Heart left ventricle (tissue), 16 donors: ENCODE measurements at regions of chr17 and their contacts with region 1.

Region 1: GRCh38 chr17:42586514-42587230 is 9.1 kb upstream of the PSMC3IP start:
- DNase-seq: no peak
- ATAC-seq: no peak
- H3K4me3 ChIP-seq: no peak overlapping the region
- H3K27ac ChIP-seq: peak overlapping the region in 2 of 12 donors; percentile 1 to 65
- H3K4me1 ChIP-seq: peaks cover 0 to 36% (median 10%) of the 10 kb centered on the region in 12 donors
- H3K27me3 ChIP-seq: no peaks in the 10 kb centered on the region
- CTCF ChIP-seq: no peak
- POLR2A ChIP-seq: no peak

Region 2: GRCh38 chr17:42677008-42677857 is 90.6 kb after region 1 on chr17:
- intact Hi-C with region 1: loop called in 1 of 10 experiments (anchors 10 kb)
- DNase-seq: peak; percentile 100
- ATAC-seq: peak; percentile 70 to 87 (median 82)
- H3K4me3 ChIP-seq: peak overlapping the region; percentile 79 to 97 (median 92)
- H3K27ac ChIP-seq: peak overlapping the region; percentile 66 to 99 (median 96)
- H3K4me1 ChIP-seq: peaks cover 2 to 81% (median 65%) of the 10 kb centered on the region in 12 donors
- H3K27me3 ChIP-seq: peaks cover 0 to 35% (median 0%) of the 10 kb centered on the region in 9 donors
- CTCF ChIP-seq: no peak
- POLR2A ChIP-seq: no peak

Region 3: GRCh38 chr17:42704837-42705494 is 118.3 kb after region 1 on chr17:
- intact Hi-C with region 1: loop called in 1 of 10 experiments (anchors 5 kb)
- DNase-seq: no peak
- ATAC-seq: no peak
- H3K4me3 ChIP-seq: no peak overlapping the region
- H3K27ac ChIP-seq: no peak overlapping the region
- H3K4me1 ChIP-seq: no peaks in the 10 kb centered on the region
- H3K27me3 ChIP-seq: no peaks in the 10 kb centered on the region
- CTCF ChIP-seq: no peak
- POLR2A ChIP-seq: no peak

Region 4: GRCh38 chr17:42754782-42755181 is 168.1 kb after region 1 on chr17:
- intact Hi-C with region 1: loop called in 1 of 10 experiments (anchors 5 kb)
- DNase-seq: peak in 4 of 5 donors; percentile 23 to 78 (median 52)
- ATAC-seq: peak; percentile 74 to 89 (median 82)
- H3K4me3 ChIP-seq: no peak overlapping the region
- H3K27ac ChIP-seq: peak overlapping the region in 4 of 12 donors; percentile 3 to 43 (median 14)
- H3K4me1 ChIP-seq: peaks cover 0 to 31% (median 19%) of the 10 kb centered on the region in 12 donors
- H3K27me3 ChIP-seq: peaks cover 0 to 7% (median 0%) of the 10 kb centered on the region in 9 donors
- CTCF ChIP-seq: no peak
- POLR2A ChIP-seq: no peak

Region 5: DNA sequence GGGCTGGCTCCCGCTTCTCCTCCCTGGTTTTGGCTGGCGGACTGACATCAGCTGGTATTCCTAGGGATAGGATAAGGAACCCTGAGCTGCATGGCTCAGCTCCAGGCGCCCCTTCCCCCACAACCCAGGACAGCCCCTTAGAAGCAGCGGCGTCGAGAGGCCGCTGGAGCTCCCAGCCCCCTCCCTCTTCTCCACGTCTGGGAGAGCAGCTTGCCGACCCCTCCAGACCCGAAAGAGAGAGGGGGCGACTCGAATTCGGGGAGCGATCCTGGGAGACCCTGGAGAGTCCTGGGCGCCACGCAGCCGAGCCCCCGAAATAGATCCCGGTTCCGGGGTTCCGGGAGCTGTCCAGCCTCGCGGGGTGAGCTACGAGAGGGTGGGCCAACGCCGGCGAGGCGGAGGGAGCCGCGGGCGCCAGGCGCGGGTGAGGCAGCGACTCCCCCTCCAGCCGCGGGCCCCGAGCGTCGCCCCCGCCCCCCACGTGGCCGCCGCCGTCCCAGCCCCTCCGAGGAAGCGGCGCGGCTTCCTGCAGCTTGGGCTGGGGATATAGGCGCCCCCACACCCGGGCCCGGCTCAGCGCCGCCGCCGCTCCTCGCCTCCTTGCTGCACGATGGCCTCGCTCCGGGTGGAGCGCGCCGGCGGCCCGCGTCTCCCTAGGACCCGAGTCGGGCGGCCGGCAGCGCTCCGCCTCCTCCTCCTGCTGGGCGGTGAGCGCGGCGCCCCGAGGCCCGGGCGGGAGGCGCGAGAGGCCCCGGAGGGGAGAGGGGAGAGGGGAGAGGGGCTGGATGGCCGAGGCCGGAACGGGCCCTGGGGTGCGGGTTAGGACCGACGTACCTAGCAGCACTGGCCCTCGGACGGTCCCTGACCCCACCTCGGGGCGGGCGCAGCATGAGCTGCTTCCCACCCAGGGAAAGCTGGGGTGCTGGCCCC is 174.2 kb after region 1 on chr17 and contains the start of gene RAMP2:
- intact Hi-C with region 1: loop called in 3 of 10 experiments (anchors 5 to 10 kb)
- DNase-seq: peak in 3 of 5 donors; percentile 58 to 63 (median 60)
- ATAC-seq: peak in 3 of 4 donors; percentile 12 to 56 (median 52)
- H3K4me3 ChIP-seq: peak within 1 kb of the TSS; percentile 44 to 92 (median 70)
- H3K27ac ChIP-seq: peak within 1 kb of the TSS; percentile 78 to 98 (median 90)
- H3K4me1 ChIP-seq: peaks cover 3 to 36% (median 16%) of the 10 kb centered on the region in 12 donors
- H3K27me3 ChIP-seq: peaks cover 0 to 27% (median 2%) of the 10 kb centered on the region in 9 donors
- CTCF ChIP-seq: no peak
- POLR2A ChIP-seq: peak in 1 of 2 donors; percentile 45
- total RNA-seq, gene RAMP2: 31.2 to 58.3 (median 39.7) TPM

Region 6: DNA sequence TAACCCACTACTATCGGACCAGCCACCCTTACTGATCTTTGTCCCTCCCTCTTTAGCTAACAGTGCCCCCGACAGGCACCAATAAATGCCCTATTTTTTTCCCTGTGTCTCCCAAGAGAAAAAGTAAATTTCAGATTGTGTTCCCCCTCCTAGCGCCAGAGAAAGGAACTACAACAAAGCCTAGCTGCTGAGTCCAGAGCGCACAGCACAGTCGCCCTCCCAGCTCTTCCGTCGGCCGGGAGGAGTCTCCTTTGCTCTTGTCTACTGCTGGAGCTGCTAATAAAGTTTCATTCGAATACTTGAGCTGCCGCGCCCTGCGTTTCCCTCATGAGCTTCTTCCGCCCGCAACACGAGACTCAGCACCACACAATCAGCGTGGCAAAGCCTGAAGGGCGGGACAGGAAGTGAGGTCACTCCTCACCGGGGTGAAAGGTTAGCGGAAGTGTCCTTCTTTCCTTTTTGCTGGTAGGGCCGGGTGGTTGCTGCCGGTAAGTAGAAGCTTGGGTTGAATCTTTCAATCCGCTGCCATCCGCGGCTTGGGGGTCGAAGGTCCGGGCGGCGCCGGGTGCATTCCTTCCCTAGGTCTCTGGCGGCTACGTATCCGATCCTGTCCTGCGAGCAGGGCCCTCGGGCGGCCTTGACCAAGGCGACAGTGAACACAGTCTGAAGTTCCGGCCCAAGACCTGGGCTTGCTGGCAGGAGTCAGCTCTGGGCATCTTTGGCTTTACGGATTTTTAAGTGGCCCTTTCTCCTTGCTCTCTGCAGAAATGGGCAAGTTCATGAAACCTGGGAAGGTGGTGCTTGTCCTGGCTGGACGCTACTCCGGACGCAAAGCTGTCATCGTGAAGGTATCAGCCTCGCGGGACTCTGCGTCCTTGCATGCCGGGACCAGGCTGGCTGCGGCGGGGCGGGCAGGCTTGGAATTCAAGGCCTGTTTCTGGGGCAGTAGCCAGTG is 411.6 kb after region 1 on chr17 and contains the start of gene RPL27:
- intact Hi-C with region 1: loop called in 1 of 10 experiments (anchors 10 kb)
- DNase-seq: peak; percentile 97 to 99 (median 98)
- ATAC-seq: peak; percentile 97 to 99 (median 98)
- H3K4me3 ChIP-seq: peak within 1 kb of the TSS; percentile 50 to 94 (median 77)
- H3K27ac ChIP-seq: peak within 1 kb of the TSS; percentile 26 to 97 (median 87)
- H3K4me1 ChIP-seq: peaks cover 7 to 40% (median 16%) of the 10 kb centered on the region in 12 donors
- H3K27me3 ChIP-seq: no peaks in the 10 kb centered on the region
- CTCF ChIP-seq: peak; percentile 79 to 98 (median 89)
- POLR2A ChIP-seq: peak in 1 of 2 donors; percentile 89
- total RNA-seq, gene RPL27: 477 to 796 (median 664) TPM